A673 (cell line): ENCODE measurements at regions of chr17 and their contacts with region 1.

Region 1: DNA sequence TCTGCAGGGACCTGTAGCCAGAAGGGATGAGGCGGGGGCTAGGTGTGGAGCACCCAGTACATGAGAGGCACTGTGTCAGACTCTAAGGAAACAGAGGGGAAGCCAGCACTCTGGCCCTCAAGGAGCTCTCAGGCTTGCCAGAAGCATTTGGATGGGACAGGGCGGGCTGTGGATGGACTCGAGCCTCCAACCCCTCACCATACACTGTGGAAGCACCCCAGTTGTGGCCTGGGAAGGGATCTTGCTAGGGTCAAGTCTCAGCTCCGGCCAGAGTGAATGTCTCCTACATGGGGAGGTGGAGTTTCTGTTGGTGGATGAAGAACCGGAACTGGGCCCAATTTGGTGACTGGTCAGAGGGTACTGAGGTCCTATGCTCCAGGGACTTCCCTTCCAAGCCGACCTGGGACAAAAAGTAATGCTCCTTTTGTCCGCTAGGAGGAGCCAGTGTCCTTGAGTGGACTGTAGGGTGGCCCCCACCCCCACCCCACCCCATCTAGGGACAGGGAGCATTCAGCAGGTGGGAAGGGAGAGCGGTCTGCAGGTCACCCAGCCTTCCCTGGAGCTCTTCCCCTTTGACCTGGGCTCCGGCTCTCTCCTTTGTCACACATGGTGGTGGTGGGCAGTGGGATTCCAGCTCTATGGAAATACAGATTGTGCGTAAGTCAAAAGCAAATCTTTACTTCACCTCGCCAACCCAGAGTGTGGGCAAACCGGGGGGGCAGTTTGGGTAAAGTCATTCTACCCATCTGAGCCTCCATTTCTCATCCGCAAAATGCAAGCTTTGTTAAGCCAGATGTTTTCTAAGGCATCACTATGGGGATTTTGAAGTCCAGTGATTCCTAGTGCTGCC is 20.4 kb upstream of the PHB1 start:
- DNase-seq: peak; percentile 64
- H3K4me3 ChIP-seq: no peak overlapping the region
- H3K27ac ChIP-seq: no peak overlapping the region
- H3K4me1 ChIP-seq: no peaks in the 10 kb centered on the region
- H3K27me3 ChIP-seq: no peaks in the 10 kb centered on the region
- CTCF ChIP-seq: peak; percentile 81

Region 2: GRCh38 chr17:49407981-49408501 is 27.0 kb before region 1 on chr17:
- CTCF ChIA-PET with region 1: no interaction called
- POLR2A ChIA-PET with region 1: no interaction called
- intact Hi-C with region 1: no loop called
- DNase-seq: peak; percentile 76
- H3K4me3 ChIP-seq: no peak overlapping the region
- H3K27ac ChIP-seq: no peak overlapping the region
- H3K4me1 ChIP-seq: no peaks in the 10 kb centered on the region
- H3K27me3 ChIP-seq: no peaks in the 10 kb centered on the region
- CTCF ChIP-seq: peak; percentile 95

Region 3: DNA sequence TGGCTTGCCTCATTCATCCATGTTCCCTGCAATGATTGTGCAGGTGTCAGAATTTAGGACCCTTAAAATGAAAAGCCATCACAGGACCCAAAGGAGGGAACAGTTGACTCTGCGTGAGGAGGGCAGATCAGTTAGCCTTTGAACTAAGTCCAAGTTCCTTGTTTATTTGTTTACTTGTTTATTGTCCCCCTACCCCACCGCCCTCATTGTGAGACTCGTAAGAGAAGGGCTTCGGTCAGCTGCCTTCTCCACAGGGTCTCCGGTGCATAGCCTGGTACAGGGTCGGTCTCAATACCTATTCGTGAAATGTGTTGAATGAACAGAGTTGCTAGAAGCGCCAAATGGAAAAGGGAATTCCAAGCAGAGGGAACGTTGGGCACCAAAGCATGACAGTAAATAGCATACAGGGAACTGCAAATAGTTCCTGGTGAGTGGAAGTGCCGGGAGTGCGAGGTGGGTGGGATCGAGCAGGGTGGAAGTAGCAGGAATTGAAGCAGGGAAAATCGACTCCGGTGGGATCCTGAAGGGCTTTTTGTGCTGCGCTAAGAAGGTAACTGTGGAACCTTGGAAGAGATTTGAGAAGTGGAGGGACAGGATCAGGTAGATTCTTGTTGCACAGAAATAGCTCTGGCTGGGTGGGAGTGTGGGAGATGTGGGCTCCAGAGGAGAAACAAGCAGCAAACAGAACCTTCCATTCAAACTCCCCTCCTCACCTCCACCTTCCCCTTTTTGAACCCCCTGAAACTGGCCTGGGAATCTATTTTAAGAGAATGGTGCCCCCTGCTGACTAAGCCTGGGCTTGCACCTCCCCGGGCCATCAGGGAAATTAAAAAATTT is 260.0 kb after region 1 on chr17:
- CTCF ChIA-PET with region 1: no interaction called
- POLR2A ChIA-PET with region 1: no interaction called
- intact Hi-C with region 1: loop called (anchors 10 kb)
- DNase-seq: peak; percentile 49
- H3K4me3 ChIP-seq: no peak overlapping the region
- H3K27ac ChIP-seq: no peak overlapping the region
- H3K4me1 ChIP-seq: no peaks in the 10 kb centered on the region
- H3K27me3 ChIP-seq: no peaks in the 10 kb centered on the region
- CTCF ChIP-seq: peak; percentile 96